ENCODE measurements at regions of chr4 and their contacts with region 1.

Region 1: DNA sequence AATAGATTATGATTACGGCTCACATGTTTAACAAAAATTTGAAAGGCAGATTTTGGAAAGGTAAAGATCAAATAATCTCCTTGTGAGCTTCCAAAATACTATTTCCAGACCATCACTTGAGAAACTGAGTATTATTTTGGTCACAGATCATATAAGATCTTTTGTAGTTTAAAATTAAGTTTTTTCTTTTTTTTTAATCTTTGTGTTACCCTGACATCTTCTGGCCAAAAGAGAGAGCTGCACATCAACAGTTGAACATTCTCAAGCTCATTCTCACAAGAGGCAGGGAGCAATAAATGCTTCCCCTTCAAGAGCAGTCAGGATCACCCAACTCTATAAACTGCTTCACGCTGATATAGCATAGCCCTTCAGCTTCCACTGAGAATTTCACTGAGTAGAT is 15.9 kb downstream of the TMEM192 start:
- DNase-seq: no peak
- ATAC-seq: no peak

Region 2: DNA sequence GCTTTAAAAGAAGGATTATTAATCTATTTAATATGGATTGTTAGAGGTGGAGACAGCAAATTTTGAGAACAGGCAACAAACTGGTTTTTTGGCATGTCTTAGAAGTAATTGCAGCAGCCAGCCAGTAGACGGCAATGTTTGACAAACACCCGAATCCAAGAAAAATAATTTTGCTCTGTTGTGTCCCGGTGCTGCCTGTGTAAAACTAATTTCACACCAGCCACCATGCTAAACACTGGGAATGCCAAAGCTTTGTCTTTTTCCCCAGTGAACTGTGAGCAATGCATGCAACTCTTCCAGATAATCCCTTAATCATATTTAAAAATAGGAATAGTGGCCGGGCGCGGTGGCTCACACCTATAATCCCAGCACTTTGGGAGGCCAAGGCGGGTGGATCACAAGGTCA is 317.0 kb before region 1 on chr4:
- intact Hi-C with region 1: loop called (anchors 10 kb)
- DNase-seq: no peak
- ATAC-seq: peak; percentile 43

Measured in Right ventricle myocardium superior (tissue), 1 donor.